HEK293 (cell line): ENCODE measurements at regions of chr17 and their contacts with region 1.

Region 1: GRCh38 chr17:18183334-18184142 is at the start of gene ALKBH5:
- H3K4me3 ChIP-seq: peak within 1 kb of the TSS; percentile 59
- H3K27ac ChIP-seq: peak within 1 kb of the TSS; percentile 94
- H3K4me1 ChIP-seq: peaks cover 31% of the 10 kb centered on the region
- CTCF ChIP-seq: peak; percentile 83

Region 2: GRCh38 chr17:17818088-17818526 is 365.4 kb before region 1 on chr17:
- CTCF ChIA-PET with region 1: no interaction called
- POLR2A ChIA-PET with region 1: interaction called, 16 read pairs
- H3K4me3 ChIP-seq: no peak overlapping the region
- H3K27ac ChIP-seq: peak overlapping the region; percentile 28; the same call in 1 of the 2 replicates
- H3K4me1 ChIP-seq: peaks cover 19% of the 10 kb centered on the region
- CTCF ChIP-seq: no peak

Region 3: DNA sequence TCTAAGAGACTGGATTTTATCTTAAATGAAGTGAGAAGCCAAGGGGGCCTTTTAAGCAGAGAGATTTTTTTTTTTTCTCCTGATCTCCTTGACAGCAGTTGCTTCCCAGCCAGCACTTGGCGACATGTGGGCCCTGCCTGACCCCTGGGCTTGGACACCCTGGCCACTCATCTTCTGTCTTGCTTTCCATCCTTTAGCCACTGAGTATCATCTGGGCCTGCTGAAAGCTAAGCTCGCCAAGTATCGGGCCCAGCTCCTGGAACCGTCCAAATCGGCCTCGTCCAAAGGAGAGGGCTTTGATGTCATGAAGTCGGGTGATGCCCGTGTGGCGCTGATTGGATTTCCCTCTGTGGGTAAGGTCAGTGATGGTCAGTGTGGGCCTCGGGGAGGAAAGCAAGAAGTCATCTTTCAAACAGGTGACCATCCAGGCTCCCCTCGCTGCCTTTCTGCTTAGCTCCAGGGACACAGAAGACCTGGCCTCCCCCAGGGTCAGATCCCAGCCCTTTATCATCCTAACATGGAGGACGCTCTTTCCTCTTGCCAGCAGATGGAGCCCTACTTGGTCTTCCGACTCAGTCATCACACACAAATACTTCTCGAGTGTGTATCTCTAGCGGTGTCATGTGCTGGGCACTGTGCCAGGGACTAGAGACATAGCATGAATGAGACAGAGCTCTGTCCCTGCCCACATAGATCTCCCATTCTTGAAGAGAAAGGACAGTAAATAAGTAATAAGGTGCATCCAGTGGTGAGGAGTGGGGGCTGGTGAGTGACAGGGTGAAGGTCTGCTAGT is 89.7 kb before region 1 on chr17:
- CTCF ChIA-PET with region 1: interaction called, 3 read pairs
- POLR2A ChIA-PET with region 1: interaction called, 10 read pairs
- H3K4me3 ChIP-seq: no peak overlapping the region
- H3K27ac ChIP-seq: 0 out of 2 replicates have a peak overlapping the region, but pooled peaks have one; percentile 17
- H3K4me1 ChIP-seq: 0 out of 2 replicates have a peak, but pooled peaks cover 2% of the 10 kb centered on the region
- CTCF ChIP-seq: no peak; the same call in 1 of the 2 replicates

Region 4: DNA sequence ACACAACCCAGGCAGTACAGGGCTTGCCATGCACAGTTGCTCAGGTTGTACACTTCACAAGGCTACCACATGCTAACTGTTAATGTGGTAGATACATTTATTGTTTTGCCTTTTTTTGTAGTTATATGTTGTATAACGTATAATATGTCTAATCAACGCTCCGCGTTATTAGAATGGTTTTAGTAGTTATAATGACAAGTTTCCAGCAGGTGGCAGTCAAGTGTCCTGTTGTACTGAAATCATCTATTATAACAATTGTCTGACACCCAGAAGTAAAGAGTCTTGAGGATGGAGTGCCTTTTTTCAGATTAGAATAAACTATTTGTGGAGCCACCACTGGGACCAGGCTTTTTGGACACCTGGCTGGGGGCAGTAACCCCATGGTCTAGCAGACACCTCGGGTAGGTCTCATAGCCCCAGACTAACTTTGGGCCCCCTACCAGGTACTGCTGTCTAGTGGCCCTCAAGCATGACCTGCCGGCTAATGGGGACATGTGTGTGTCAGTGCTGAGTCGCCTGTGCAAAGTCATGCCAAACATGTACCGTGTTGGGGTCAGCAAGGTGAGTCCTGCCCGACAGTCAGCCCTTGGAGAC is 42.2 kb before region 1 on chr17:
- CTCF ChIA-PET with region 1: interaction called, 20 read pairs
- POLR2A ChIA-PET with region 1: interaction called, 3 read pairs
- H3K4me3 ChIP-seq: no peak overlapping the region
- H3K27ac ChIP-seq: no peak overlapping the region
- H3K4me1 ChIP-seq: no peaks in the 10 kb centered on the region
- CTCF ChIP-seq: peak; percentile 31; the same call in 1 of the 2 replicates

Region 5: DNA sequence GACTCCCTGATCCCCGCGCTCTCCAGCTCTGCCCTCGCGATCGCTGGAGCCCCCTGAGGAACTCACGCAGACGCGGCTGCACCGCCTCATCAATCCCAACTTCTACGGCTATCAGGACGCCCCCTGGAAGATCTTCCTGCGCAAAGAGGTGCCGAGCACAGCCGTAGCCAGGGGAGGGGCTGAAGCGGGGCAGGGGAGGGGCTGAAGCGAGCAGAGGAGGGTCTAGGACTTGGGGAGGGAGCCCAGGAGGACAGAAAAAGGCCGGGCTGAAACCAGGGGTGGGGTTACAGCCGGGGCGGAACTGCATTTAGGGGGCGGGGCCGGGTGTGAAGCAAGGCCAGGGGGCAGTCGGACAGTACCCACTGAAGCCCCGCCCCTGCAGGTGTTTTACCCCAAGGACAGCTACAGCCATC is 29.8 kb before region 1 on chr17:
- CTCF ChIA-PET with region 1: interaction called, 3 read pairs
- POLR2A ChIA-PET with region 1: interaction called, 22 read pairs
- H3K4me3 ChIP-seq: peak overlapping the region; percentile 24
- H3K27ac ChIP-seq: no peak overlapping the region
- H3K4me1 ChIP-seq: no peaks in the 10 kb centered on the region
- CTCF ChIP-seq: no peak

Region 6: GRCh38 chr17:18166894-18167293 is 16.6 kb before region 1 on chr17:
- CTCF ChIA-PET with region 1: interaction called, 4 read pairs
- POLR2A ChIA-PET with region 1: interaction called, 12 read pairs
- H3K4me3 ChIP-seq: no peak overlapping the region
- H3K27ac ChIP-seq: no peak overlapping the region
- H3K4me1 ChIP-seq: no peaks in the 10 kb centered on the region
- CTCF ChIP-seq: no peak

Region 7: DNA sequence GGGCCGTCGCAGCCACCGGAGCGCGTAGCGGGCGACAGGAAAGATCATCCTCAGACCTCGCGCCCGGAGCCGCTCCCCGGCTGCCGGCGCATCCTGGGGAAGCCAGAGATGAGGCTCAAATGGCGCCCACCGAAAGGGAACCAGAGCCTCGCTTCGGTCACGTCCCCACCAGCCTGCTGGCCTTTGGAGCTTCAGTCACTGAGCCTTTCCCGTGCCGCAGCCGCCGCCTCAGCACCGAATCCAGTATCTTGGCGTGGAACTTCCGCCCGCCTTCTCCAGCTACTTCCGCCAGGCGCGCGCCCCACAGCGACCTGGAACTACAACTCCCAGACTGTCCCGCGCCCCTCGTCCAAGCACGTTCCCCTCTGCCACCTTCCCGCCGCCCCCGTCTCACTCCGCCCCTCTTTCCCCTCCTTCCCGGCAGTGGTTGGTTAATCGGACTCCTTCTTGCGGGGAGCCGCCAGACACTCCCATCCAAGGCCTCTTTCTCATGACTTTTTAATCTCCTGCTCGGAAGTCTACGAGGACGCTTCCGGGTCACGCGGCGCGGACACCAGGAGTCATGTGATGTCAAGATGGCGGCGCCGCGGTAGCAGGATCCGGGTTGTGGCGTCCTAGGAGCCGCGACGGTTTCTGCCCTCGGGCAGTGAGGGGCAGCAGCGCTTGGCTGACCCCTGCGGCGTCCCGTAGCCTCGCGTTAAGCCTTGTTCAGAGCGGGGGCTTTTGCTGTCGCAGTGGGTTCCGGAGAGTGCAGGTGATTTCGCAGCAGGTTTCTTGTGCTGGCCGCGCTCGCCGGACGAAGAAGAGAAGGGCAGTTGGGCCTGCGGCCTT is 131.4 kb after region 1 on chr17 and contains the starts of genes SMCR8 and TOP3A:
- CTCF ChIA-PET with region 1: no interaction called
- POLR2A ChIA-PET with region 1: no interaction called
- H3K4me3 ChIP-seq: peak within 1 kb of the TSS; percentile 85
- H3K27ac ChIP-seq: peak within 1 kb of the TSS; percentile 93
- H3K4me1 ChIP-seq: peaks cover 21% of the 10 kb centered on the region
- CTCF ChIP-seq: no peak